ENCODE measurements at regions of chr5 and their contacts with region 1.

Region 1: GRCh38 chr5:16489322-16489791 is 23.8 kb upstream of the ZNF622 start:
- DNase-seq: no peak
- ATAC-seq: peak; percentile 71

Region 2: DNA sequence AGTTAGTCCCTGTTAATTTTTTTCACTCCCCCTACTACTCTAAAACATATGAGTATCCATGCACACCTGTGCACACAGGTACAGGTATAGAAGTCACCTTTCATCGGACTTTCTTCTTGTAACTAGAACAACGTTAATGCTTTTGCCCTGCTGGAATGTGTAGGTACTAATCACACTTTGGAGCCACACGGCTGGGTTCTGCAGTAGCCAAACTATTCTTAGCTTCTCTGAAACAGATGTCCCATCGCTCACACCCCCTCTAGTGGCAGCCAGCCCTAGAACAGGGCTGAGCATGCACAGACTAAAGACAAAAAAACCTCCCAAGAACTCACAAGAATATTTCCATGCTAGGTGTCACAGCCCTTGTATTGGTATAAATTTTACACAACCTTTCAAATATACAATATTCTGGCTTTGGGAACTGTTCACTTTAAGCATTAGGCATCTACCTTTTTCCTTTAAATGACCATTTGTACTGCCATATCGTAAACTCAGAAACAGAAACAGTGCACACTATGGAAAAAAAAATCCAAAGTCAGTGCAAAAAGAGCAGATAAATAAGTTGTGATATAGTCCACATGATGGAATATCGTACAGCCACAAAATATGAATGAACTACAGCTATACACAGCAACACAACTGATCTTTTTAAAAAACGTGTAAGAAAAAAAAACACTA is 63.4 kb after region 1 on chr5:
- intact Hi-C with region 1: loop called (anchors 5 kb)
- DNase-seq: peak; percentile 87
- ATAC-seq: peak; percentile 84

Region 3: GRCh38 chr5:16564248-16564867 is 75.0 kb after region 1 on chr5:
- intact Hi-C with region 1: loop called (anchors 5 kb)
- DNase-seq: peak; percentile 40
- ATAC-seq: peak; percentile 62

Region 4: DNA sequence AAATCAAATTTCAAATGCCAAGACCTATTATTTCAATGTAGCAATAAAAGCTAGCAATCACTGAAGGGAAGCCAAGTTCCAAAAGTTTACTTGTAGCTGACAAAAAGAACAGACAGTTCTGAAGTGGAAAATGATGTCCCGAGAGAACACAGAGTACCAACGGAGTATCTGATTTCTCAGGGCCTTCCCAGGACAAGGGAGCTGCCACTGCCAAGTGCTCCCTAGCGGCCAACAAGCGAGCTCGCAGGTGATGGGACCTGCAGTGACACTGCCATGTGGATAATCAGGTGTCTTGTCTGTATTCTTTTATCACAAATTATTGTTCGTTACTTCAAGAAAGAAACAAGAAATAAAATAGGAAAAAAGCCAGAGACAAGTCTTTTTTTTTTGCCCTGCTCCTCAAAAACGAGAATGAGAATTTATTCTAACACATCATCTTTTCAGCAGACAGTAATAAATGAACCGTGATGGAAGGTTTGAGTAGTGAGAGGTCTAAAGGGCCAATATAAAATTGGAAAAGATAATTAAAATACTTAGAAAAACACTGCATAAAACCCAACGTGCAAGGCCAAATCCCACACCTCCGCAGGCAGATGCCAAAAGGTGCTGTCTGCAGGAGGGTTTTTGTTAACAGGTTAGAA is 287.4 kb after region 1 on chr5:
- intact Hi-C with region 1: loop called (anchors 10 kb)
- DNase-seq: peak; percentile 50
- ATAC-seq: peak; percentile 88